Head of caudate nucleus (tissue), 42 donors: ENCODE measurements at regions of chr13 and their contacts with region 1.

Region 1: GRCh38 chr13:44050450-44051063 is 170.9 kb downstream of the LACC1 start:
- DNase-seq: peak in 7 of 42 donors; percentile 14 to 62 (median 27)

Region 2: DNA sequence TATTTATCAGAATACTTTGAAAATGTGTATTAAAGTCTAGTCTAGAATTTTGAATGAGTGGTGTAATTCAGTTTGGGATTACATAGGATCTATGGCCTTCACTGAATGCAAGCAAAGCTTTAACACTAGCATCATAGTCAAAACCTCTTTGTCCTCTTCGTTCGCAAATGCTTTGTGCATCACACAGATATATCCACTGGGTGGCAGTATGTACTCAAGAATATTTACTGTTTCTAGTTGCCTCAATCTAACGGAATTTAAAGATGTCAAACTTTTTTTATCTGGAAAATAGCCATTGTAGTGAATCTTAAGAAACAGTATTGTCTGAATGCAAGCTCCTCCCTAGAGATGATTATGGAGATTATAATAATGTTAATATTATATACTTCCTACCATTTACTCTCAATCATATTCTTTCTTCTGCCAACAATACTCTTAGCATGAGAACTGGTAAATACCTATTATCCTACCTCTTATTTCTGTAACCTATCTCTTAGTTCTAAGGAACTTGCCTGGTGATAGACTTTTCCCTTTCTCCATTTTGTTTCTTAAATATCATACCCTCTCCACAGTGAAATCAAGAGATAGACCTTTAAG is 145.0 kb before region 1 on chr13:
- intact Hi-C with region 1: loop called (anchors 10 kb)
- DNase-seq: peak in 25 of 42 donors; percentile 11 to 82 (median 53)

Region 3: DNA sequence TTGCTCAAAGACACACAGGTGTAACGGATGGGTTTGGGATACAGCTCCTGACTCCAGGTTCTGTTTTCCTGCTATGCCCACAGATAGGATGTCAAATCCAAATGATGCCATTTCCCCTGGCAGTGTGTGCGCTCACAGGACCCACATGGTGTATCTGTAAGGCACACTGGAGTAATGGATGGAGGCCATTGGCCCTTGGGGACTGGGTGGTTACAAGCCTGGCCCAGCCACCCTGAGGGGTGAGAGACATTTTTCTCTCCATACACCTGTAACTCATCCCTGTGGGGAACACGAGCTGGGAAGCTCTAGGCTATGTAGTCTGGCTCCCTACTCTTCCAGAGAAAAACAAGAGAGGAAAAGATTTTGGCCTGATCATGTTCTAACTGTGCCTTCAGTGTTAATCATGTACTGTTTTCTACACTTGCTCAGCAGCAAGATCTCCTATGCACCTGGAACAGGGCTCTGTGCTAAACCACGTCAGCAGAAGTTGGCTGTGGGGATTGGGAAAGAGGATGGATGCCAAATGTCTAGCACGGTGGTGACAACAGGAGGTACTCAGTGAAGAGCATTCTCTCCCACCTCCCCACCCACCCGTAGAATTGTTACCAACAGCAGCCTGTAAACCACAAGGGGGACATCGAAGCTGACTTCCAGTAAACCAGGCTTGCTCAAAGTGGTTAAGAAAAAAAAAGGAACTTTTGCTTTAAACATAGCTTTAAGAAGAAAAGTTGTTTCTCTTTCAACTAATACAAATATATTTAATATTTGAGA is 66.2 kb after region 1 on chr13:
- intact Hi-C with region 1: no loop called
- DNase-seq: no peak

Region 4: GRCh38 chr13:44141725-44142539 is 91.4 kb after region 1 on chr13:
- intact Hi-C with region 1: loop called (anchors 2 kb)
- DNase-seq: peak; percentile 95 to 100 (median 99)